ENCODE measurements at regions of chr12 and their contacts with region 1.

Region 1: DNA sequence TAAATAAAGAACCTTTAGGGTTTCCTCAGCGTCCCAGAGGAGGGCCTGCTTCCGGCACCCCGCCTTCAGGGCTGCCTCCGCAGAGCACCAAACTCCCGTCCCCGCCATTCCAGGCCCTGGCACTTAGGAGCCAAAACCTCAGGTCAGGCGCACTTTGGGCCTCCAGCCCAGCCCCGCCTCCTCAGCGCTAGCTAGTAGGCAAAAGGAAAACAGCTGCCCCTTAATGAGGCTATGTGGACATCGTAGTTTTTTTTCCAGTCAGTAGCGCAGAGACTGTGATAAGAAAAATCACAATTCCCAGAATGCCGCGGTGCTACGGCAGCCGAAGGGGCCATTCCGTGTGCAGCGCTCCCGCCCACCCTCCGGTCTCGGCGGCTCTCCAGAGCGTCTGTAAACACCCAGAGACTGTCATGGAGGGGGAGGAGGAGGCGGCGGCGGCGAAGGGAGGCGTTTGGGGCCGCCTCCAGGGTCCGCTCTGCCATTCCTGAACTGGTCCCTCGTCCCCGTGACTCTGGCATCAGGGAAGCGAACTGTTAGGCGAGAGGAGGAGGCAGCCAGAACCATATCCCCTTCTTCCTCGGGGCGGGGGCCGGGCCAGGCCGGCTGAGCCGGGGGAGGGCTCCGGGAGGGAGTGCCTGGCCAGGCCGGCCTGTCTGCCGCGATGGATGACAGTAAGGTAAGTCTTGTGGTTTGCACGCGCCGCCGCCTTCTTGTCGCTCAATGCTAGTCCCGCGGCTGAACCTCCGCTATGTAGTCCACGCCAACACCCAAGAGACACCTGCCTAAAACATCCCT is at the start of gene CREBL2:
- DNase-seq: peak; percentile 92
- H3K4me3 Mint-ChIP-seq: peak within 1 kb of the TSS; percentile 82
- H3K27ac Mint-ChIP-seq: peak within 1 kb of the TSS; percentile 95
- H3K4me1 Mint-ChIP-seq: peaks cover 54% of the 10 kb centered on the region
- H3K27me3 Mint-ChIP-seq: no peaks in the 10 kb centered on the region
- total RNA-seq, gene CREBL2: 30.4 to 32.2 TPM

Region 2: GRCh38 chr12:12171991-12172521 is 439.7 kb before region 1 on chr12:
- CTCF ChIA-PET with region 1: no interaction called
- POLR2A ChIA-PET with region 1: no interaction called
- intact Hi-C with region 1: no loop called
- DNase-seq: peak; percentile 49
- H3K4me3 Mint-ChIP-seq: no peak overlapping the region
- H3K27ac Mint-ChIP-seq: no peak overlapping the region
- H3K4me1 Mint-ChIP-seq: peaks cover 12% of the 10 kb centered on the region
- H3K27me3 Mint-ChIP-seq: peaks cover 11% of the 10 kb centered on the region

Region 3: DNA sequence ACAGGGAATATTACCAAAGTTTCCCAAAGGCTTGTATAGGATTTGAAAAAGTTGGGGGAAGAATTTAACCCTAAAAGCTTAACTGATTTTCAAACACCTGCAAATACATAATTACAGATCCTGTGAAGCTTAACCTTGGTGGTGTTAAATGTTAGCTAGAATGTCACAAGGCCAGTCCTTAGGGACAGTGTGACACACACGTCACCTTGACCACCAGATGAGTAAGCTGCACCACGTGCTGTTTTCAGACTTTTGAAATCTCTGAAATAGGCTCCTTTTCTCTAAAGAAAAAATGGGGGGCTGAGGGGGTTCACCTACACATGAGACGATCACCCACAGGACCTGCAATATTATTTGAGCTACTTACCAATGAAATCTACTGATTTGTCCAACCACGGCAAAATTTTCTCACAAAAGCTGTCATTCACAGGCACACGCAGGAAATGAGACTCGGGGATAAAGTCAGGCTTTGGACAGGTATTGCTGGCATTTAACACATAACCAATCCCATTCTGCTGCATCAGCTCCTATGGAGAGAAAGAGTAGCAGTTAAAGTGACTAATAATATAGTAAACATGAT is 125.0 kb before region 1 on chr12:
- CTCF ChIA-PET with region 1: no interaction called
- POLR2A ChIA-PET with region 1: no interaction called
- intact Hi-C with region 1: loop called (anchors 5 kb)
- DNase-seq: peak; percentile 59
- H3K4me3 Mint-ChIP-seq: peak overlapping the region; percentile 6
- H3K27ac Mint-ChIP-seq: peak overlapping the region; percentile 99
- H3K4me1 Mint-ChIP-seq: peaks cover 56% of the 10 kb centered on the region
- H3K27me3 Mint-ChIP-seq: no peaks in the 10 kb centered on the region

Region 4: DNA sequence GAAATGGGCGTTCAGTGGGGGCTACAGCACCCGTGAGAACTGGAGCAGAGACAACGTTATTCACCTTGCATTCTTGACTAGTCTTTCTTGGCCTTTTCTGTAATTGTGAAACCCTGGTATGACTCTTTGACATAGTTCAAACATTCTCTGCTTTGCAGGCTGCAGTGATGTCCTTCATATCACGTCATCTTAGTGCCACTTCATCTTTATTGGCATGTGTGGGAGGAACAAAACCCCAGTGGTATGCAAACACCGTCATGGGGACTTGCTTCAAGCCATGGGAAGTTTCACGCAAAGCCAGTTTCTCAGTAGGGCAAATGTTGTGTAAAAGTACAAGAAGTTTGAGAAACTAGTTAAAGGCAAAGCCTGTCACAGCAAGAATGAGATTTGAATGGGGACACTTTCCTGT is 28.8 kb before region 1 on chr12:
- CTCF ChIA-PET with region 1: interaction called, 4 read pairs
- POLR2A ChIA-PET with region 1: interaction called, 3 read pairs
- intact Hi-C with region 1: loop called (anchors 1 kb)
- DNase-seq: peak; percentile 81
- H3K4me3 Mint-ChIP-seq: peak overlapping the region; percentile 40
- H3K27ac Mint-ChIP-seq: peak overlapping the region; percentile 84
- H3K4me1 Mint-ChIP-seq: peaks cover 50% of the 10 kb centered on the region
- H3K27me3 Mint-ChIP-seq: peaks cover 3% of the 10 kb centered on the region

Region 5: GRCh38 chr12:12696562-12697383 is 85.1 kb after region 1 on chr12:
- CTCF ChIA-PET with region 1: no interaction called
- POLR2A ChIA-PET with region 1: interaction called, 5 read pairs
- intact Hi-C with region 1: loop called (anchors 1 kb)
- DNase-seq: peak; percentile 92
- H3K4me3 Mint-ChIP-seq: peak overlapping the region; percentile 92
- H3K27ac Mint-ChIP-seq: peak overlapping the region; percentile 98
- H3K4me1 Mint-ChIP-seq: peaks cover 65% of the 10 kb centered on the region
- H3K27me3 Mint-ChIP-seq: no peaks in the 10 kb centered on the region

Measured in activated CD4-positive, alpha-beta memory T cell treated with anti-CD3 and anti-CD28 coated beads for 36 hours (primary cell).